GM10248 (cell line): ENCODE measurements at regions of chr17 and their contacts with region 1.

Region 1: GRCh38 chr17:82320956-82321927 is 3.8 kb upstream of the CD7 start:
- DNase-seq: peak; percentile 83
- CTCF ChIP-seq: peak; percentile 87

Region 2: DNA sequence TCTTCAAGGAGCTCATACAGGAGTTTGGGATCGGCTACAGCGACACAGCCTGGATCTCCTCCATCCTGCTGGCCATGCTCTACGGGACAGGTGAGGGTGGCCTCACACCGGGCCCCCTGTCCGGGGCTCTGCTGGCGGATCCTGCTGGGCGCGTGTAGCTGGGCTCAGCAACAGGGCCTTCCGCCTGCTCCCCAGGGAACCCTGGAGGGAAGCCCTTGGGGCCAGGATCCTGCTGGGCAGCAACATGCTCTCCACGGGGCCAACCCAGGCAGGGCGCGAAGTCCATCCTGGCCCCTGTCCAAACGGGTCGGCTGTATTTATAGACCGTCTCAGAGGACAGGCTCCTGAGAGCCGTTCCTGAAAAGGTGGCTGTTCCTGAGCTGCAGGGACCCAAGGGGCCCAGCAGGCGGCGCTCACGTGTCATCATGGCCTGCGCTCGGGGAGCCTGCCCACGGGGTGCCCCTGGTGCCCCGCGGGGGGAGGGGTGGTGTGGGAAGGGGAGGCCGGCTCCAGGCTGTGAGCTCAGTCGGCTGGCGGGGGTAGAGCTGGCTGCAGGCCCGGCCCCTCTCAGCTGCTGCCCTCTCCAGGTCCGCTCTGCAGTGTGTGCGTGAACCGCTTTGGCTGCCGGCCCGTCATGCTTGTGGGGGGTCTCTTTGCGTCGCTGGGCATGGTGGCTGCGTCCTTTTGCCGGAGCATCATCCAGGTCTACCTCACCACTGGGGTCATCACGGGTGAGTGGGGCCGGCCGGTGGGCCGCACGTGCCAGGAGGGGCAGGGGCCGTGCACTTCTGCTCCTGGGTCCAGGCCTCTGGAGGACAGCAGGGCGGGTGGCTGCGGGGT is 84.9 kb before region 1 on chr17:
- CTCF ChIA-PET with region 1: interaction called, 18 read pairs
- POLR2A ChIA-PET with region 1: no interaction called
- DNase-seq: no peak
- CTCF ChIP-seq: peak; percentile 86

Region 3: DNA sequence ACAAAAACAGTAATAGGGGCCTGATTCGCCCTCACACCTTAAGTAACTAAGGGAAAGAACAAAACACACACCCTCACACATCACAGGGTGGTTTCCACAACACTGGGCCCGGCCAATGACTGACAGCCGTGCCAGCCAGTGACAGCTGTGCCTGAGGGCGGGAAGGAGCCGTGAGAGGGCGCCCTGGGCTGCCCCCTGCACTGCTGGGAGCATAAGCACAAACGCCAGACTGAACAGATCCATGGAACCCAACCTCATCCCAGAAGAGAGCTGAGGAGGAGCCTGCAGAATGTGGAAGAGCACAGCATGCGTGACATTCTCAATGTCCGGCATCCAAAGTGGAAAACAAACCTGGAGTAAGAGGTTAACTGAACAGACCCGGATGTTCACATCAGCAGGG is 63.8 kb before region 1 on chr17:
- CTCF ChIA-PET with region 1: no interaction called
- POLR2A ChIA-PET with region 1: no interaction called
- DNase-seq: no peak
- CTCF ChIP-seq: no peak

Region 4: GRCh38 chr17:82297714-82298537 is 23.3 kb before region 1 on chr17:
- CTCF ChIA-PET with region 1: interaction called, 59 read pairs
- POLR2A ChIA-PET with region 1: no interaction called
- DNase-seq: peak; percentile 88
- CTCF ChIP-seq: peak; percentile 4

Region 5: DNA sequence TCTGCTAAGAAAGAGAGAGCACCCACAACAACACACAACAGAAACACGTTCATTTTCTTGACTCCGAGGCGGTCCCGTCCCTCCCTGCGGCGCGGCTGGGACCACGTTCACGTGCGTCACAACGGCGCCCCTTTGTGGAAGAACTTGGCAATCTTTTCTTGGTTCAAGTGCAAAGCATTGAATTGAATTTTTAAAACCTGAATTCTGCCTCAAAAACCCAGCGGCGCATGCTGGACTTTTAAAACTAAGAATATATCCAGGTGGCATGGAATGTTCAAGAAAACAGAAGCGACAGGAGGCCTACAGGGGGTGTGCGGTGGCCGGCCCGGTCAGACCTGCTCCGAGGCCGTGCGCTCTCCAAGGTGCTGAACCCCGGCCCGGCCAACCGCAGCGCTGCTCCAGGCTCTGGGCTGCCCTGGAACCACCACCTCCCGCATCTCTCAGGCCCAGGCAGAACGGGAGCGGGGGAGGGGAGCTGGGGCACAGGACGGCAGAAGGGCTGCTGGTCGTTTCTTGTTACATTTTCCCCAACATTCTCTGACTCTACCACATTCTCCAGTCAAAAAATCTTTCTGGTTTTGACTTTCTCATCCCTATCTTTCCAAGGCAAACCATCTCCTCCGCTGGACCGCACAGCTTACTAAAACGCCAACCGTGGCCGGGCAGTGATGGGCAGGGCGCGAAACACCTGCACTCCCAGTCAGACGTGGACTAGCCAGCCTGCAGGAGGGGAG is 93.5 kb after region 1 on chr17:
- CTCF ChIA-PET with region 1: no interaction called
- POLR2A ChIA-PET with region 1: no interaction called
- DNase-seq: peak; percentile 79
- CTCF ChIP-seq: peak; percentile 65